ENCODE measurements at regions of chr7 and their contacts with region 1.

Region 1: DNA sequence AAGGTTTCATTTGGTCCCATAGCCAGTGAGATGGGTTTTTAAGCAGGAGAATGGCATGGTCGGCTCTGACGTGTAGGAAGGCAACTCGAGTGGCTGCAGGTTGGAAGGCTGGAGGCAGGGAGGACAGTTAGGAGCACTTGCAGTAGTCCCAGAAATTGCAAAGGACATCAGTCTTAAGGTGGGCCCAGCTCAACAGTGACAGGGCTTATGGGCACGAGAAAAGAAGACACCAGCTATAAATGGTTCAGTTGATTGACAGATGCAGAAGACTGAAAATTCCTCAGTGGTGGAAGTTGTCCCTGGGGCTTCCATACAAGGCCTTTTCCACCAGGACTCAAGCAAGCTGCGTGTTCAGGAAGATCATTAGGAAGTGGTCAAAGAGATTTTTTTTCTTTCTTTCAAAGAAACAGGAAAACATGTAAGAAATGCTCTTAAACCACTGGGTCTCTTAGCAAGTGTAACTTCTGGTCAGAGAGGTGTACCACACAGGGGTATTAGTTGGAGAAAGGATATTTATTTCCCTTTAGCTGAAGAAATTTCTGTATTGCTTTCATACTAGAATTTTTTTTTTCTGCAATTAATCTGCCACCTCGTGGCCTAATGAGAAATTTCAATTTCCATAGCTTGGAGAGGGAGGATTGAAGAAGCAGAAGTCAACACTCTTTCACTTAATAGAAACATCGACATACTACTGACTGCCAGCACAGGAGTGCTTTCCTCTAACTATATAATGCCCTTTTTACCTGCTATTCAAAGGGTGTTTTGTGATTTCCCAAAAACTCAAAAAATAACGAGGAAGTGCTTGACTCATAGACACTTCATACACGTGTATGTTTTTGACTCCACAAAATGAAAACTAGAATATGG is 177.4 kb upstream of the NAMPT start:
- DNase-seq: no peak
- ATAC-seq: peak; percentile 60 to 68 (median 61)
- H3K4me3 ChIP-seq: no peak overlapping the region
- H3K27ac ChIP-seq: peak overlapping the region in 2 of 3 donors; percentile 42 to 44
- H3K4me1 ChIP-seq: peaks cover 0 to 46% (median 9%) of the 10 kb centered on the region in 4 donors
- H3K27me3 ChIP-seq: no peaks in the 10 kb centered on the region
- CTCF ChIP-seq: peak; percentile 59 to 74 (median 65)
- POLR2A ChIP-seq: no peak

Region 2: DNA sequence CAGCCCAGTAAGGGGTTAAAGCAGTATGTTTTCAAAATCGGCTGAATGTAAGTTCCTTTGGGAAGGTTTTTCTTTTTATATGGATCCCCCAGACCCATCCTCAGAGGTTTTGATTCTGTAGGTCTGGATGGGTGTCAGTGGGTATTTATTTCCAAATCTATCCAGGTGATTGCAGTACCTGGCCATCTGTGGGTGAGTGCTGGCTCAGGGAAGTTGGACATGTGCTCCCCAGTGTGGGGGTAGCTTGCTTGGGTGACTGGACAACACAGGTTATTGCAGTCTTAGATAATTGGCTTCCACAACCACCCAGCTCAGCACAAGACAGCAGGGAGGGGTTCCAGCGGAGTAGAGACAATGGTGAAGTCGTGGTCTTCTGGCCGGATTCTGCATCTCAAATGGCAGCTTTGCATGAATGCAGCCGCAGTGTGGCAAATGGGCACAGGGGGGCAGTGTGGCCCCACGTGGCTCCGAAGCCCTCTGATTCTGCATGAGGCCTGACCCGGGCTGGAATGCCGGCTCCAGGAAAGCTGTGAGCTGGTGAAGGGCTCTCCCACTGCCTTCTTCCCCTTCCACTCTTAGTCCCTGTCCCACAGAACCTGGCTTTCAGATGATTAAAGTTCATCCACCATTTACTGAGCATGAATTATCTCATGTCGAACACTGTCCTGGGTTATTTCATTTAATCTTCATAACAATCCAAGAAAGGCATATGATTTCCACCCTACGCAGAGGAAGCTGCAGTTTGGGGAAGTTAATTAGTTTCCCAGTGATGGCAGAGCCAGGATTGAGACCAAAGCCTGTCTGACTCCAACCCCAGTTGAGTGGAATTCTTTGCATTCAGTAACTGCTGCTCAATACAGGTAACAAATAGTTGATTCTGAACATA is 285.6 kb before region 1 on chr7:
- intact Hi-C with region 1: loop called (anchors 5 to 10 kb)
- DNase-seq: peak; percentile 85 to 91 (median 89)
- ATAC-seq: peak; percentile 69 to 79 (median 73)
- H3K4me3 ChIP-seq: peak overlapping the region in 1 of 3 donors; percentile 7
- H3K27ac ChIP-seq: peak overlapping the region; percentile 78 to 94 (median 90)
- H3K4me1 ChIP-seq: peaks cover 0 to 68% (median 21%) of the 10 kb centered on the region in 4 donors
- H3K27me3 ChIP-seq: no peaks in the 10 kb centered on the region
- CTCF ChIP-seq: peak; percentile 93 to 96 (median 95)
- POLR2A ChIP-seq: peak; percentile 40

Region 3: DNA sequence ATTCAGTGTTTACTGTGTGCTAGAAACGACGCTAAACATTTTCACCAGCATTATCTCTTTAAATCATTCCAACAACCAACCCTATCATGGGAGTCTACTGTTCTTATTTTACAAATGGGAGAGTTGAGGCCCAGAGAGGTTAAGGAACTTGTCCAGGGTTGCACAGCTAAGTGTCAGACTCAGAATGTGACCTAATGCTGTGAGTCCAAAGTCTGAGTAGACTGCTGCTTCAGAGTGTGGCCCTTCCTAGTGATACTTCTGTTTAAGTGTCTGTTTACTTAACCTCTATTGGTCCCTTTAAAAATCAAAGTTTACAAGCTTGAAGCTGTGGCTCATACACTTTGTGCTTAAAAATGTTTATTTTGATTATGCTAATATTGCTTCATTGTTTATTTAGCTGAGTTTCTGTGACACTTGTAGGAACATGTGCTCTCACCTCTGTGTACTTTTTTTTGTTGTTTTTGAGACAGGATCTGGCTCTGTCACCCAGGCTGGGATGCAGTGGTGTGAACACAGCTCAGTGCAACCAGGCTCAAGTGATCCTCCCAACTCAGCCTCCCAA is 265.7 kb before region 1 on chr7:
- intact Hi-C with region 1: no loop called
- DNase-seq: peak; percentile 46 to 79 (median 73)
- ATAC-seq: peak; percentile 81 to 89 (median 84)
- H3K4me3 ChIP-seq: no peak overlapping the region
- H3K27ac ChIP-seq: peak overlapping the region; percentile 65 to 88 (median 77)
- H3K4me1 ChIP-seq: peaks cover 0 to 50% (median 18%) of the 10 kb centered on the region in 4 donors
- H3K27me3 ChIP-seq: no peaks in the 10 kb centered on the region
- CTCF ChIP-seq: no peak
- POLR2A ChIP-seq: peak; percentile 76